ENCODE measurements at regions of chr1 and their contacts with region 1.

Region 1: DNA sequence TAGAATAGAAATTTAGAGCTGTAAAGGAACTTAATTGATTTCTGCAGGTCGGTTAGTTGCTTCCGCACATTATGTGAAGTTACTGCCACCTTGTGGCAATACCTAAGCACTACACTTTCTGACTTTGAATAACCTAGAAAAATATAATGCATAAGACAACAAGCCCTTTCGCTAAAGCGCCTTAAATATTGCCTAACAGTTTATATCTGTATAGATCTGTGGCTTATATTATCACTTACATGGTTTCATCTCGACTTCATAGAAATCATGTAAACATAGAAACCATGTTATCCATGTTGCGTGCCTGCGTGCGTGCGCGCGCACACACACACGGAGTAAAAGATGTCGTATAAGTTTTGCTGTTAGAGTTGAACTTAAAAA is 10.9 kb upstream of the IFI16 start:
- DNase-seq: peak; percentile 50
- ATAC-seq: peak; percentile 68
- H3K4me3 ChIP-seq: no peak overlapping the region
- H3K27ac ChIP-seq: no peak overlapping the region
- H3K4me1 ChIP-seq: peaks cover 7% of the 10 kb centered on the region
- H3K27me3 ChIP-seq: no peaks in the 10 kb centered on the region
- CTCF ChIP-seq: peak; percentile 68 to 81 (median 80)
- EP300 ChIP-seq: no peak
- POLR2A ChIP-seq: no peak
- RAD21 ChIP-seq: peak; percentile 96

Region 2: DNA sequence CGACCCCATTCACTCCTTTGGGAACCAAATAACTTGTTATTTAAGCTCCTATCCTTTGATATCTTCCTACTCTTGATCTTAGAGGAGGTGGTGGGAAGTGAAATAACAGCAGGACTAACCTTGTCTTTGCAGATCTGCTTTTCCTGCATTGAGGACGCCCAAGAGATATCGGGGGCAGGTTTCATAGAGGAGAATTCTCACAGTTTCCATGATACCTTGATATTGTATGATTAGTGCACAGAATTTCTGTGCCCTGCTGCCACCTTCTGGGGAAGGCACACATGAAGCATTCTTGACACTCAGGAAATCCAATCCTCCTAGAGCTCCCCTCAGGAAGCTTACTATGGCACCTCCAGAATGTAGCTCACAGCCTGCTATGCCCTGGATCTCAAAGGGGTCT is 669.0 kb before region 1 on chr1:
- CTCF ChIA-PET with region 1: interaction called, 13 read pairs
- POLR2A ChIA-PET with region 1: no interaction called
- RAD21 ChIA-PET with region 1: interaction called, 11 read pairs
- SMC1A ChIA-PET with region 1: interaction called, 3 read pairs
- in situ Hi-C with region 1: no loop called
- intact Hi-C with region 1: no loop called
- DNase-seq: no peak
- ATAC-seq: peak; percentile 84
- H3K4me3 ChIP-seq: no peak overlapping the region
- H3K27ac ChIP-seq: no peak overlapping the region
- H3K4me1 ChIP-seq: peaks cover 5% of the 10 kb centered on the region
- H3K27me3 ChIP-seq: no peaks in the 10 kb centered on the region
- CTCF ChIP-seq: peak; percentile 61 to 69 (median 63)
- EP300 ChIP-seq: no peak
- POLR2A ChIP-seq: no peak
- RAD21 ChIP-seq: peak; percentile 80

Region 3: DNA sequence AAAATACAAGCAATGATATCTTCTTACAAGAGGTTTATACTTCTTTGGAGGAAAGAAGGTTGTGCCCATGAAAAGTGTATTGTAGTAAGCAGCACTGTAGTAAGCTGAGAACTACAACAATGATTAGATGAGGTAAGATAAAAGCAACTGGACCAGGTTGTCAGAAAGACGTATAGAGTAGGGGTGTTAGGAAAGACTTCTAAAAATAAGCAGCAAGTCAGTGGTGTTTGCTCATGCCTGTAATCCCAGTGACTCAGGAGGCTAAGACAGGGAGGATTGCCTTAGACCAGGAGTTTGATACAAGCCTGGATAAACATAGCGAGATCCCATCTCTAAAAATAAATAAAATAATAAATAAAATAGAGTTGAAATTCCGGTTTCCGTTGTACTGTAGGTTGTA is 414.8 kb before region 1 on chr1:
- CTCF ChIA-PET with region 1: no interaction called
- POLR2A ChIA-PET with region 1: no interaction called
- RAD21 ChIA-PET with region 1: no interaction called
- SMC1A ChIA-PET with region 1: no interaction called
- in situ Hi-C with region 1: no loop called
- intact Hi-C with region 1: no loop called
- DNase-seq: no peak
- ATAC-seq: no peak
- H3K4me3 ChIP-seq: no peak overlapping the region
- H3K27ac ChIP-seq: no peak overlapping the region
- H3K4me1 ChIP-seq: no peaks in the 10 kb centered on the region
- H3K27me3 ChIP-seq: no peaks in the 10 kb centered on the region
- CTCF ChIP-seq: no peak
- EP300 ChIP-seq: no peak
- POLR2A ChIP-seq: no peak
- RAD21 ChIP-seq: no peak

Region 4: DNA sequence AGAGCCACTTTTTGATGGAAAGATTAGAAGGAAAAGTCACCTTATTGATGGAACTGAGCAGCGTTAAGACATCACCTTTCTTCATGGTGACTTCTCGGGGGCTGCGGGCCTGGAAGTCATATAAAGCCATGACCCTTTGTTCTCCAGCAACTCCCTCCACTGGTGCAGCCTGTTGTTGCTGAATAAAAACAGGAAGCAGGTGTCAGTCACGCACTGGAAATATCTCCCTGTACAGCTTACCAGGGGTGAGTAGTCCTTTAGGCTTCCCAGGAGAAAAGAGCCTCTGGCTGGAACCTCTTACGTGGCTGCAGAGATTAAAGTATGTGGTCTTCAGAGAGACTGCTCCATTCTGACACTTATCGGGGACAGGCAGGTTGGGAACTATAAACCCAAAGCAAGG is 344.2 kb before region 1 on chr1:
- CTCF ChIA-PET with region 1: interaction called, 8 read pairs
- POLR2A ChIA-PET with region 1: no interaction called
- RAD21 ChIA-PET with region 1: interaction called, 3 read pairs
- SMC1A ChIA-PET with region 1: no interaction called
- in situ Hi-C with region 1: no loop called
- intact Hi-C with region 1: loop called (anchors 10 kb)
- DNase-seq: no peak
- ATAC-seq: no peak
- H3K4me3 ChIP-seq: no peak overlapping the region
- H3K27ac ChIP-seq: no peak overlapping the region
- H3K4me1 ChIP-seq: no peaks in the 10 kb centered on the region
- H3K27me3 ChIP-seq: no peaks in the 10 kb centered on the region
- CTCF ChIP-seq: no peak
- EP300 ChIP-seq: no peak
- POLR2A ChIP-seq: no peak
- RAD21 ChIP-seq: no peak

Region 5: DNA sequence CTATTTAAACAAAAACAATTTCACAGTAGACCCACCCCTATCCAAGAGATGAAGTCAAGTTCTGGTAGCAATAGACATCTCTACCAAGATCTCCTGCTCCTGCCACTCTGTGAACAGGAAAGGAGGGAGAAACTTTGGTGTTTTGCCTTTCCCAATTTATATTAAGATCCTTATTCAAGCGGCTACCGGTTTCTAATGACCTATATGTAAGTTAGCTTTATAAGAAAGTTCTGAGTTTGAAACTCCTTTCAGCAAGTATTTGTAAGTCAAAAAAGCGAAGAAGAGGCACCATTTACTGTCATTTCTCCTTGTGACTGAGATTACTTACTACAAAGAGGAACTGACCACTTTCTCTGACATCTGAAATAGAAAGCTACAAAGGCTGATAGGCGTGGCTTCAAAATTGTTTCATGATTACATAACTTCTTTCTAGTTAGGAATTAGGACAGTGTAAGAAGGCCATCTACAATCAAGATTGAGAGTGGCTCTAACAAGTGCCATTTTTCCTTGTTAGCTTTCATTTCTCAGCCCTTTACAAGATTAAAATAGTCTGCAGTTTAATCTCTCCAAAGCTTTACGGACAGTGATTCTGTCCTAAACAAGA is 167.8 kb before region 1 on chr1 and contains the start of gene MNDA:
- CTCF ChIA-PET with region 1: interaction called, 15 read pairs
- POLR2A ChIA-PET with region 1: interaction called, 3 read pairs
- RAD21 ChIA-PET with region 1: interaction called, 5 read pairs
- SMC1A ChIA-PET with region 1: interaction called, 12 read pairs
- in situ Hi-C with region 1: no loop called
- intact Hi-C with region 1: no loop called
- DNase-seq: peak; percentile 82
- ATAC-seq: peak; percentile 90
- H3K4me3 ChIP-seq: peak within 1 kb of the TSS; percentile 68
- H3K27ac ChIP-seq: peak within 1 kb of the TSS; percentile 97
- H3K4me1 ChIP-seq: peaks cover 9% of the 10 kb centered on the region; the same call in 1 of the 2 replicates
- H3K27me3 ChIP-seq: no peaks in the 10 kb centered on the region
- CTCF ChIP-seq: no peak
- EP300 ChIP-seq: peak; percentile 53 to 61; a peak in 1 of 4 replicates
- POLR2A ChIP-seq: peak; percentile 41; the same call in 1 of the 2 replicates
- RAD21 ChIP-seq: no peak
- polyA plus RNA-seq, gene MNDA: 81.9 to 91.8 TPM

Region 6: DNA sequence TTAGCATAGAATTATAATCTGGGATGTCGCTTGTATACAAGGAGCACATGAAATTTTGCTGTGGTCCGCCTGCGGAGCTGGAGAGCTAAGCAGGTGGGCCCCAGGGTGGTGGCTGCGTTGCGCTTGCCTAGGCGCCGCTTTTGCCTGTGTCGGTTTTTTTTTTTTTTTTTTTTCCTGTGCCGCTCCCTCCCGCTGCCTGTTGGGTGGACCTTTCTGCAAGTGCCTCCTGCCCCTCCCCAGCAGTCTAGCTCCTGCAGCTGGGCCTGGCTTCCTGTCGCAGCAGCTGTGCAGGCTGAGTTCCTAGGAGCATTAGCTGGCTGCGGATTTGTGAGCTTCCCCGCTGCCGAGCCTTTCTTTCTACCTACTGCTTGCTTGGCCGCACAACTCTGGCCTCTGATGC is 46.8 kb before region 1 on chr1:
- CTCF ChIA-PET with region 1: no interaction called
- POLR2A ChIA-PET with region 1: no interaction called
- RAD21 ChIA-PET with region 1: interaction called, 7 read pairs
- SMC1A ChIA-PET with region 1: interaction called, 3 read pairs
- in situ Hi-C with region 1: no loop called
- intact Hi-C with region 1: loop called (anchors 2 kb)
- DNase-seq: peak; percentile 30
- ATAC-seq: peak; percentile 93
- H3K4me3 ChIP-seq: peak overlapping the region; percentile 53; the same call in 1 of the 2 replicates
- H3K27ac ChIP-seq: peak overlapping the region; percentile 6; the same call in 1 of the 2 replicates
- H3K4me1 ChIP-seq: 0 out of 2 replicates have a peak, but pooled peaks cover 6% of the 10 kb centered on the region
- H3K27me3 ChIP-seq: no peaks in the 10 kb centered on the region
- CTCF ChIP-seq: no peak
- EP300 ChIP-seq: no peak
- POLR2A ChIP-seq: no peak
- RAD21 ChIP-seq: no peak

Region 7: DNA sequence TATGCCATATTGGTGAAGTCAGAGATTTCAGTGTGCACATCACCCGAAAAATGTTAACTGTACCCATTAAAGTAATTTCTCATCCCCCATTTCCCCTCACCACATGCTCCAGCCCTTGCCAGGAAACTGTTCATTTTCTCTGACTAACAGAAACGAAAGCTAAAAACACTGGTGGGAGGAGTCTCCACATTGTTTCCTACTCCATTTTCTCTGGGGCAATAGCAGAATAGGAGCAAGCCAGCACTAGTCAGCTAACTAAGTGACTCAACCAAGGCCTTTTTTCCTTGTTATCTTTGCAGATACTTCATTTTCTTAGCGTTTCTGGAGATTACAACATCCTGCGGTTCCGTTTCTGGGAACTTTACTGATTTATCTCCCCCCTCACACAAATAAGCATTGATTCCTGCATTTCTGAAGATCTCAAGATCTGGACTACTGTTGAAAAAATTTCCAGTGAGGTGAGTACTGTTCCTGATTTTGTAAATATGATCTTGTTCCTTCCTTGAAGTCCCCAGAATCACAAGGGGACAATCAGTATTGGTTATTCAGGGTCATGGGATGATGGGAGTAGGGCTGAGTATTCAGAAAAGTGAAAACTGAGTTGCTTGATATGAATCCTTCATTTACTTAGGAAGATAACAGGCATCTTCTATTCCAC is 11.1 kb after region 1 on chr1 and contains the start of gene IFI16:
- CTCF ChIA-PET with region 1: interaction called, 19 read pairs
- POLR2A ChIA-PET with region 1: interaction called, 3 read pairs
- RAD21 ChIA-PET with region 1: interaction called, 4 read pairs
- SMC1A ChIA-PET with region 1: interaction called, 20 read pairs
- in situ Hi-C with region 1: no loop called
- intact Hi-C with region 1: no loop called
- DNase-seq: peak; percentile 87
- ATAC-seq: peak; percentile 73
- H3K4me3 ChIP-seq: peak within 1 kb of the TSS; percentile 91
- H3K27ac ChIP-seq: peak within 1 kb of the TSS; percentile 100
- H3K4me1 ChIP-seq: peaks cover 15% of the 10 kb centered on the region; the same call in 1 of the 2 replicates
- H3K27me3 ChIP-seq: no peaks in the 10 kb centered on the region
- CTCF ChIP-seq: no peak
- EP300 ChIP-seq: peak; percentile 25 to 37; a peak in 1 of 4 replicates
- POLR2A ChIP-seq: peak; percentile 80
- RAD21 ChIP-seq: no peak
- polyA plus RNA-seq, gene IFI16: 191 to 255 TPM

Region 8: DNA sequence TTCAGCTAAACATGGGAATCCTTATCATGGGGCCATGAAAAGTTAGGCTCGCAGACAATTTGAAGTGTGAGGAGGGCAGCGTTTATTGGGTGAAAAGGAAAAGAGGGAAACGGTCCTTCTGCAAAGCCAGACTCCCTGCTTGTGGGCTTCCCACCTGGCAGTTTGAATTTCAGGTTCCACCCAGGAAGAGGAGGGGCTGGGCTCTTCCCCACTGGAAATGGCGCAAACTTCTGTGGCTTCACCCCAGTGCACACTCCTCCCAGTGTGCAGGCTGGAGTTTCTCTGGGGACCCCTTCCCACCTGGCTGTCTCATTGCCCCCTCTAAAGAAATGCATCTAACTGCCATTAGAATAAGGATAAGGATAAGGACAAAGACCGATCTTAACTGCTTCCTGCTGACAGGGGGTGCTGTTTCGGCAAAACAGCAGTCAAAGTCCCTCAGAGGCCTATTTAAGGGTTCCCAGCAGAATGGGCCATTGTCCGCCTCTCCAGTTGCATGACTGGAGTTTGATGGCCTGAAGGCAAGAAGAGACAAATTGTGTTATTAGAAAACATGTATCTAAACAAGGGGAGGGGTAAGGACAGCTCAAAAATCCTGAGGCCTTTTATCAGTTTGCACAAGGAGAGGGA is 57.4 kb after region 1 on chr1:
- CTCF ChIA-PET with region 1: no interaction called
- POLR2A ChIA-PET with region 1: no interaction called
- RAD21 ChIA-PET with region 1: no interaction called
- SMC1A ChIA-PET with region 1: no interaction called
- in situ Hi-C with region 1: no loop called
- intact Hi-C with region 1: no loop called
- DNase-seq: no peak
- ATAC-seq: peak; percentile 53
- H3K4me3 ChIP-seq: no peak overlapping the region
- H3K27ac ChIP-seq: no peak overlapping the region
- H3K4me1 ChIP-seq: no peaks in the 10 kb centered on the region
- H3K27me3 ChIP-seq: no peaks in the 10 kb centered on the region
- CTCF ChIP-seq: peak in 2 of 3 experiments; percentile 22 to 29; a peak in 1 of 6 replicates
- EP300 ChIP-seq: no peak
- POLR2A ChIP-seq: 0 out of 2 replicates have a peak, but pooled peaks have one; percentile 18
- RAD21 ChIP-seq: no peak

Region 9: DNA sequence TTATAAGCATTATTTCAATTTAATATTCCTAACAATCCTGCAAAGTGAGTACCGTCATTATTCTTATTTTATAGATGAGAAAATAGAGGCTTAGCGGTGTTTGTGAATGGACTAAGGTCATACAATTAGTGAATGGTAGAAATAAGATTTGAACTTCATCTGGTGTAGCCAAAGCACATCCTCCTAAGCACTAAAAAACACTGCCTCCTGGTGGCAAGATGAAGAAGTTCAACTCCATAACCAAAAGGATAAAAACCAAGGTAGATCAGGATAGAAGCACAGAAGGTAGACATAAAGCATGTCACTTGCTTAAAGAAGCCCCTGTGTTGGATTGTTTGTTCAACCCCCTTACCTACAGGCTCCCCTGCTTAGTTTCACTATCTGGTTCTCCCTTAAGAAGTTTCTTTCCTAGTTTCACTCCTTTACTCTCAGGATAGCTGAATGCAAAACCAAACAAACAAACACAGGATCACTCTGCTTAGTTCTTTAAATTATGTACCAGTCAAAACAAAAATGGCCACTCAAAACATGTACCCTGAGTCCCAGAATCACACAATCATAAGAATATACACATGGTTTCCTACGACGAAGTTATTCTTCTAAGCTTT is 90.5 kb after region 1 on chr1:
- CTCF ChIA-PET with region 1: interaction called, 13 read pairs
- POLR2A ChIA-PET with region 1: no interaction called
- RAD21 ChIA-PET with region 1: no interaction called
- SMC1A ChIA-PET with region 1: interaction called, 6 read pairs
- in situ Hi-C with region 1: no loop called
- intact Hi-C with region 1: no loop called
- DNase-seq: no peak
- ATAC-seq: peak; percentile 83
- H3K4me3 ChIP-seq: no peak overlapping the region
- H3K27ac ChIP-seq: no peak overlapping the region
- H3K4me1 ChIP-seq: no peaks in the 10 kb centered on the region
- H3K27me3 ChIP-seq: 0 out of 4 replicates have a peak, but pooled peaks cover 0 to 2% of the 10 kb centered on the region in 2 experiments
- CTCF ChIP-seq: peak; percentile 58 to 73 (median 71)
- EP300 ChIP-seq: no peak
- POLR2A ChIP-seq: no peak
- RAD21 ChIP-seq: peak; percentile 62